ENCODE measurements at regions of chr10 and their contacts with region 1.

Region 1: GRCh38 chr10:69073026-69073425 is 14.9 kb upstream of the SRGN start:
- DNase-seq: no peak
- ATAC-seq: no peak
- H3K4me3 ChIP-seq: no peak overlapping the region
- H3K27ac ChIP-seq: no peak overlapping the region
- H3K4me1 ChIP-seq: no peaks in the 10 kb centered on the region
- H3K27me3 ChIP-seq: no peaks in the 10 kb centered on the region
- CTCF ChIP-seq: no peak

Region 2: DNA sequence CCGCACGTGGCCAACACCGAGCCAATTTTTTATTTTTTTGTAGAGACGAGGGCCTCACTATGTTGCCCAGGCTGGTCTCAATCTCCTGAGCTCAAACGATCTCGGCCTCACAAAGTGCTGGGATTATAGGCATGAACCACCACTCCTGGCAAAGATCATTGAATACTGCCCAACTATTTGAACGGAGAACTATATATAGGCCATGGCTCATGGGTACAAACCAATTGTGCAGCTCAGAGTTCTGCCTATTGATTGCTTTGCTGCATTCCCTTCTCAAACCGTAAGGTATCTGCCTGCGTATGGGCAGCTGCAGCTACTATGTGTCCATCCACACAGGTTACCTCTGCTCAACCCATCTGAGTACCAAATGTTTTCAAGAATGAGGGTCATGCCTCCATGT is 536.1 kb before region 1 on chr10:
- CTCF ChIA-PET with region 1: no interaction called
- POLR2A ChIA-PET with region 1: interaction called, 15 read pairs
- in situ Hi-C with region 1: no loop called
- intact Hi-C with region 1: no loop called
- DNase-seq: no peak
- ATAC-seq: no peak
- H3K4me3 ChIP-seq: no peak overlapping the region
- H3K27ac ChIP-seq: no peak overlapping the region
- H3K4me1 ChIP-seq: no peaks in the 10 kb centered on the region
- H3K27me3 ChIP-seq: no peaks in the 10 kb centered on the region
- CTCF ChIP-seq: no peak

Region 3: GRCh38 chr10:70758757-70759514 is 1685.9 kb after region 1 on chr10:
- CTCF ChIA-PET with region 1: no interaction called
- POLR2A ChIA-PET with region 1: no interaction called
- in situ Hi-C with region 1: no loop called
- intact Hi-C with region 1: no loop called
- DNase-seq: peak; percentile 48
- ATAC-seq: peak; percentile 78
- H3K4me3 ChIP-seq: no peak overlapping the region
- H3K27ac ChIP-seq: peak overlapping the region; percentile 40; the same call in 1 of the 2 replicates
- H3K4me1 ChIP-seq: no peaks in the 10 kb centered on the region
- H3K27me3 ChIP-seq: no peaks in the 10 kb centered on the region
- CTCF ChIP-seq: peak; percentile 89

Measured in Panc1 (cell line).